ENCODE measurements at regions of chr12 and their contacts with region 1.

Region 1: DNA sequence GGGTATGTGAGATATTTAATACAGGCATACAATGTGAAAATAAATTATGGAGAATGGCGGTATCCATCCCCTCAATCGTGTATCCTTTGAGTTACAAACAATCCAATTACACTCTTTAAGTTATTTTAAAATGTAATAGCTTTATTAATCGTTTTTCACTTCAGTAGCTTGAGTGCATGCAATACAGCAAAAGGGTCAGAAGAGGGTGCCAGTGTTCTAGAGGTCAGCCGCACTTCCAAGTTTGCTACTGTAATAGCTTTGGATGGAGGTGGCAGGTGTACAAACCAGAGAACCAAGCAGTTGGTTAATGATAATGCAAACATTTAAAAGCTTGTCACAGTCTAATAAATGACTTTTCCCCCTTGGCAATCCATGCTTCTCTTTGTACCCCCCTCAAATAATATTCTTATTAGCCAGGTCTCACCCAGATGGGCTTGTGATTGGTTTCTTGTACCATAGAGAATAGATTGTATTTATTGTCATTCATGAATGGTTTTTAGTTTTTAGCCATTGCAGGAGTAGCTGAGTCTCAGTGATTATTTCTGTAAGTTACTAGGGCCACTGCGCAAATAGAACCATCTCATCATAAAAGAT is 127.0 kb downstream of the ERC1 start:
- DNase-seq: peak; percentile 65 to 76
- H3K4me3 ChIP-seq: no peak overlapping the region
- H3K27ac ChIP-seq: no peak overlapping the region
- H3K4me1 ChIP-seq: no peaks in the 10 kb centered on the region
- H3K27me3 ChIP-seq: no peaks in the 10 kb centered on the region
- CTCF ChIP-seq: peak; percentile 85 to 96 (median 94)
- POLR2A ChIP-seq: no peak

Region 2: DNA sequence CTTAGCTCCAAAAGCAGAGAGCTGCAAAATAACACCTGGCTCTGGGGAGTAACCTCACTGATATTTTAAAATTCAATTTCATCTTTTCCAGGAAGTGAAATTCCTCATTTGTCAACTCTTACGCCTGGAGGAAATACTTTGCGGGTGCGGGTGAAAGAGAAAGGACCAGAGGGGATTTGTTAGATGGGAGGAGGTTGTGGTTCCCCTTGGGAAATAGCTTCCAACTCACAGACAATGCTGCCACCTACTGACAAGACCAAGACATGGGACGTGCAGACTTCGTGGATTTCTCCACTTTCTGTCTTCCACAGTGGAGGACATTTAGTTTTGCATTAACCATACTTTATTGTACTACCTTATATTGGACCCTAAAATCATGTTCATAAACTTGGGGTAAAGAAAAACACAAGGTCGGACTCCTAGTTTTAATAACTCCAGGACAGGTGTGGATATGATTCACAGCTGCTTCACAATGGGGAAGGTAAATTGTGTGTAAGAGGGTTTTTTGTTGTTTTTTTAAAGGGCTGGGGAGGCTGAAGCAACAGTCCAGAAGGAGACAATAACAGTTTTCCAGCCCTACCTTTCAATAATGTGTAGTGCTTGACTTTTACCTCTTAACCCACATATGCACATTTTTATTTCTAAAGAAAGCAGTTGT is 465.5 kb after region 1 on chr12:
- intact Hi-C with region 1: loop called (anchors 10 kb)
- DNase-seq: peak; percentile 68 to 79
- H3K4me3 ChIP-seq: no peak overlapping the region
- H3K27ac ChIP-seq: no peak overlapping the region
- H3K4me1 ChIP-seq: no peaks in the 10 kb centered on the region
- H3K27me3 ChIP-seq: no peaks in the 10 kb centered on the region
- CTCF ChIP-seq: peak; percentile 86 to 95 (median 93)
- POLR2A ChIP-seq: no peak

Measured in uterus (tissue), 4 donors.